B cell (primary cell): ENCODE measurements at regions of chr20 and their contacts with region 1.

Region 1: DNA sequence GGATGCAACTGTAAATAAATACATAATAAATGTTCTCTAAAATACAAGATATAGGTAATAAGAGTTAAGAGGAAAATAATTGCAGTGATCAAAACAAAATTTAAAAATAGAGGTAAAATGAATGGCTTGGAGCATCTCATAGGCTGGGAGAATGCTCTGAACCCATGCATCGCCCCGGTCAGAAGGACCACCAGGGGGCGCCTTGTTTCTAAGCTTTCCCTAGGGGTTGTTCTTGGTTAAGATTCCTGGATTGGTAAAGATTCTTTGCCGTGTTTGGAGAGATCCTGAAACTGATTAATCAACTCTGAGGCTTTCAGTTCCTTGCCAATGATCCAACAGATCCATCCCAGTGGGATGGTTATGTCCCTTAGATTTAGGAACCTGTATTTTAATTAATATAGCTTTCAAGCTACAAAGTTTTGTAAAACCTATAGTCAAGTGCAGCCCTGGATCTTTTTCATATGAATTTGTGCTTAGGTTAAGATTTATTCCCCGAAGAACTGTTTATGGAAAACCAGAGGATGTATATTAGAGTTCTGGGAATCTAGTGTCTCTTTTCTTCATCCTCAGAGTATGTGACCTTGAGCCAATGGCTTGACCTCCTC is 45.3 kb upstream of the PRELID3B start:
- DNase-seq: peak; percentile 83
- ATAC-seq: peak; percentile 68
- H3K4me3 ChIP-seq: no peak overlapping the region
- H3K4me3 Mint-ChIP-seq: no peak overlapping the region
- H3K27ac ChIP-seq: no peak overlapping the region
- H3K27ac Mint-ChIP-seq: no peak overlapping the region
- H3K4me1 ChIP-seq: peaks cover 8% of the 10 kb centered on the region in 2 donors
- H3K4me1 Mint-ChIP-seq: peaks cover 5% of the 10 kb centered on the region
- H3K27me3 ChIP-seq: peaks cover 0 to 7% (median 0%) of the 10 kb centered on the region in 4 experiments
- H3K27me3 Mint-ChIP-seq: peaks cover 16% of the 10 kb centered on the region
- CTCF ChIP-seq: peak; percentile 98

Region 2: DNA sequence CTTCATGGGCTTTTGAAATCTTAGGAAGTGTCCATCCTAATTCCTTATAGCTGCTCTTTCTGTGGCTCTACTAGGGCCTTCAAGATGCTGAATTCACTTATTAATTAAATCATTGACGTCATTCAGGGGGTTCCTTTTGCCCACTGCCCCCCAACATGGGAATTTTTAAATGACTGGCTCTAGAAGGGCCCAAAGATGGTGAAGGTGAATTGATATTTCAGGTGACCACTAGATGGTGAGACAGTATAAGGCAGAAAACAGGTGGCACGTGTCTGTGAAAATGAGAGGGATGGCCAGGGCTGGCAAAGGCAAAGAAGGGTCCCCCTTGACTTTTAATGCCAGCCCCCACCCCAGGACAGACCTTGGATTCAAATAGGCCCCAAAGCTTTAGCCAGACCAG is 223.6 kb before region 1 on chr20:
- CTCF ChIA-PET with region 1: interaction called, 18 read pairs
- POLR2A ChIA-PET with region 1: no interaction called
- intact Hi-C with region 1: no loop called
- DNase-seq: peak; percentile 48
- ATAC-seq: no peak
- H3K4me3 ChIP-seq: no peak overlapping the region
- H3K4me3 Mint-ChIP-seq: no peak overlapping the region
- H3K27ac ChIP-seq: no peak overlapping the region
- H3K27ac Mint-ChIP-seq: no peak overlapping the region
- H3K4me1 ChIP-seq: peaks cover 0 to 2% of the 10 kb centered on the region in 2 donors
- H3K4me1 Mint-ChIP-seq: no peaks in the 10 kb centered on the region
- H3K27me3 ChIP-seq: peaks cover 0 to 10% (median 3%) of the 10 kb centered on the region in 4 experiments
- H3K27me3 Mint-ChIP-seq: peaks cover 22% of the 10 kb centered on the region
- CTCF ChIP-seq: peak; percentile 55

Region 3: DNA sequence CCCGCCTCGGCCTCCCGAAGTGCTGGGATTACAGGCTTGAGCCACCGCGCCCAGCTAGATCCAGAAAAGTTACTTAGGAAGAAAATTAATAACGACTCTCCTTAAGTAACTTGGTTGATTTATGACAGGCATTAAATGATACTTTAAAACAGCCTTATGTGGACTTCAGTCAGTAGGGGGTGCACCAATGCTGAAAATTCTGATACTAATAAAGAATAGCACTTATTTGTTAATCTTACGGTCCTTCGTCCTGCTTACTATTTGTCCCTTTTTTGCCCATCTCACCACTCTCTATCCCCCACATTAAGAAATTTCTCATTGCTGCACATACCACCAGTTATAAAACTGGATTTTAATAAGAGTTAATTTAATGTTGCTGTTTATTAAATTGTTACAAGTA is 32.6 kb before region 1 on chr20:
- CTCF ChIA-PET with region 1: interaction called, 14 read pairs
- POLR2A ChIA-PET with region 1: no interaction called
- intact Hi-C with region 1: no loop called
- DNase-seq: peak; percentile 59
- ATAC-seq: peak; percentile 28
- H3K4me3 ChIP-seq: no peak overlapping the region
- H3K4me3 Mint-ChIP-seq: no peak overlapping the region
- H3K27ac ChIP-seq: no peak overlapping the region
- H3K27ac Mint-ChIP-seq: no peak overlapping the region
- H3K4me1 ChIP-seq: no peaks in the 10 kb centered on the region
- H3K4me1 Mint-ChIP-seq: no peaks in the 10 kb centered on the region
- H3K27me3 ChIP-seq: peaks cover 0 to 17% (median 9%) of the 10 kb centered on the region in 4 experiments
- H3K27me3 Mint-ChIP-seq: peaks cover 38% of the 10 kb centered on the region
- CTCF ChIP-seq: peak; percentile 67

Region 4: GRCh38 chr20:59102841-59103299 is 14.9 kb after region 1 on chr20:
- CTCF ChIA-PET with region 1: interaction called, 16 read pairs
- POLR2A ChIA-PET with region 1: no interaction called
- intact Hi-C with region 1: no loop called
- DNase-seq: no peak
- ATAC-seq: no peak
- H3K4me3 ChIP-seq: no peak overlapping the region
- H3K4me3 Mint-ChIP-seq: no peak overlapping the region
- H3K27ac ChIP-seq: no peak overlapping the region
- H3K27ac Mint-ChIP-seq: no peak overlapping the region
- H3K4me1 ChIP-seq: peaks cover 3 to 7% of the 10 kb centered on the region in 2 donors
- H3K4me1 Mint-ChIP-seq: peaks cover 10% of the 10 kb centered on the region
- H3K27me3 ChIP-seq: no peaks in the 10 kb centered on the region
- H3K27me3 Mint-ChIP-seq: peaks cover 8% of the 10 kb centered on the region
- CTCF ChIP-seq: no peak

Region 5: GRCh38 chr20:59159493-59160376 is 71.8 kb after region 1 on chr20:
- CTCF ChIA-PET with region 1: interaction called, 23 read pairs
- POLR2A ChIA-PET with region 1: no interaction called
- intact Hi-C with region 1: no loop called
- DNase-seq: peak; percentile 57
- ATAC-seq: peak; percentile 34
- H3K4me3 ChIP-seq: peak overlapping the region in 2 of 5 experiments; percentile 19 to 30
- H3K4me3 Mint-ChIP-seq: peak overlapping the region; percentile 66
- H3K27ac ChIP-seq: no peak overlapping the region
- H3K27ac Mint-ChIP-seq: peak overlapping the region; percentile 59
- H3K4me1 ChIP-seq: peaks cover 51 to 53% of the 10 kb centered on the region in 2 donors
- H3K4me1 Mint-ChIP-seq: peaks cover 58% of the 10 kb centered on the region
- H3K27me3 ChIP-seq: no peaks in the 10 kb centered on the region
- H3K27me3 Mint-ChIP-seq: peaks cover 3% of the 10 kb centered on the region
- CTCF ChIP-seq: no peak

Region 6: GRCh38 chr20:59184880-59185447 is 97.0 kb after region 1 on chr20:
- CTCF ChIA-PET with region 1: interaction called, 16 read pairs
- POLR2A ChIA-PET with region 1: interaction called, 3 read pairs
- intact Hi-C with region 1: no loop called
- DNase-seq: no peak
- ATAC-seq: no peak
- H3K4me3 ChIP-seq: no peak overlapping the region
- H3K4me3 Mint-ChIP-seq: no peak overlapping the region
- H3K27ac ChIP-seq: no peak overlapping the region
- H3K27ac Mint-ChIP-seq: no peak overlapping the region
- H3K4me1 ChIP-seq: peaks cover 15 to 18% of the 10 kb centered on the region in 2 donors
- H3K4me1 Mint-ChIP-seq: peaks cover 32% of the 10 kb centered on the region
- H3K27me3 ChIP-seq: no peaks in the 10 kb centered on the region
- H3K27me3 Mint-ChIP-seq: no peaks in the 10 kb centered on the region
- CTCF ChIP-seq: no peak

Region 7: DNA sequence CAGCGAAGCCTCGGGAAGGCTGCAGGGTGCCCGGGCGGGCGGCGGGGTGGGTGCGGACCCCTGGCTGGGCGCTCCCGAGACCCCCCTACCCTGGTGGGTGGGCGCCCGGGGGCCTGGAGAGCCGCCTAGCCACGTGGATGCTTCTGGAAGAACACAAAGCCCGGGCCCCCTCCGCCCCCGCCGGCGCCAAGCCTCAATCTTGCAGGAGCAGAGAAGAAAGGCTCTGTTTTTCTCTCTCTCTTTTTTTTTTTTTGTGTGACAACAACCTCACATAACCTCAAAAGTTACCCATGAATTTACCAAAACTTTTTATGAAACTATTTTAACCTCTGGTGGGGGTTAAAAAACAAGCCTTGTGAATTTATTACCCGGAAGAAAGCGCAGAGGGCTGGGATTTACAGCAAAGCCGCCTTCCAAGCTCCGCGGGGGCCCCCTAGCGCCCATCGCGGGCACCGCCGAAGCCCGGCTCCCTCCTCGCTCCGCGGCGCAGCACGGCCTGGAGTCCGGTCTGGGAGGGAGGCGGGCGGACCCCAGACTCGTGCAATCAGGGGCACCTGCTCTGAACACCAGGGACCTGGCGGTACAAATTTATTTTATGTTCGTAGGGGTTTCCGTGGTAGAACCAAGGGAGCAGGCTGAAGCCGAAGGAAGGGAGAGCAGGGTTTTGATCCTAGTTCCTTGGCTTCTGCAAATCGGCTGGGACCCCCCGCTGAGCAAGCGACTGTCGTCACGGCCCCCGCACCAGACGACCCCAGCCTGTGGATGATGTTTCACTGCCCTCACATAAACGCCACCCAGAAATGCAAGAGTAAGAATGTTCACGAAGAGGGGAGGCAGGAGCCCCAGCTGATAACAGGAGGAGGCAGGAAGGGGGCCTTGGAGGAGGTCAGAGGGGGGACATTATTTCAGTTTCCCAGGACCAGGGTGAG is 134.6 kb after region 1 on chr20:
- CTCF ChIA-PET with region 1: interaction called, 94 read pairs
- POLR2A ChIA-PET with region 1: interaction called, 5 read pairs
- intact Hi-C with region 1: loop called (anchors 1 kb)
- DNase-seq: peak; percentile 83
- ATAC-seq: peak; percentile 97
- H3K4me3 ChIP-seq: peak overlapping the region; percentile 46 to 93 (median 54)
- H3K4me3 Mint-ChIP-seq: peak overlapping the region; percentile 88
- H3K27ac ChIP-seq: peak overlapping the region in 1 of 2 donors; percentile 60
- H3K27ac Mint-ChIP-seq: peak overlapping the region; percentile 60
- H3K4me1 ChIP-seq: peaks cover 12 to 15% of the 10 kb centered on the region in 2 donors
- H3K4me1 Mint-ChIP-seq: peaks cover 10% of the 10 kb centered on the region
- H3K27me3 ChIP-seq: peaks cover 0 to 18% (median 6%) of the 10 kb centered on the region in 4 experiments
- H3K27me3 Mint-ChIP-seq: peaks cover 16% of the 10 kb centered on the region
- CTCF ChIP-seq: peak; percentile 97